Naive thymus-derived CD4-positive, alpha-beta T cell (primary cell): ENCODE measurements at regions of chr7 and their contacts with region 1.

Region 1: GRCh38 chr7:155763691-155764437 is 48.4 kb downstream of the SHH start:
- DNase-seq: peak in 8 of 9 donors; percentile 48 to 73 (median 60)
- ATAC-seq: peak; percentile 80
- H3K4me3 ChIP-seq: peak overlapping the region; percentile 12
- H3K4me3 Mint-ChIP-seq: peak overlapping the region; percentile 64 to 91 (median 80)
- H3K27ac ChIP-seq: peak overlapping the region; percentile 67
- H3K27ac Mint-ChIP-seq: peak overlapping the region; percentile 73 to 98 (median 91)
- H3K4me1 ChIP-seq: peaks cover 24 to 31% of the 10 kb centered on the region in 2 donors
- H3K4me1 Mint-ChIP-seq: peaks cover 39 to 67% (median 61%) of the 10 kb centered on the region in 7 donors
- H3K27me3 ChIP-seq: no peaks in the 10 kb centered on the region
- H3K27me3 Mint-ChIP-seq: no peaks in the 10 kb centered on the region

Region 2: DNA sequence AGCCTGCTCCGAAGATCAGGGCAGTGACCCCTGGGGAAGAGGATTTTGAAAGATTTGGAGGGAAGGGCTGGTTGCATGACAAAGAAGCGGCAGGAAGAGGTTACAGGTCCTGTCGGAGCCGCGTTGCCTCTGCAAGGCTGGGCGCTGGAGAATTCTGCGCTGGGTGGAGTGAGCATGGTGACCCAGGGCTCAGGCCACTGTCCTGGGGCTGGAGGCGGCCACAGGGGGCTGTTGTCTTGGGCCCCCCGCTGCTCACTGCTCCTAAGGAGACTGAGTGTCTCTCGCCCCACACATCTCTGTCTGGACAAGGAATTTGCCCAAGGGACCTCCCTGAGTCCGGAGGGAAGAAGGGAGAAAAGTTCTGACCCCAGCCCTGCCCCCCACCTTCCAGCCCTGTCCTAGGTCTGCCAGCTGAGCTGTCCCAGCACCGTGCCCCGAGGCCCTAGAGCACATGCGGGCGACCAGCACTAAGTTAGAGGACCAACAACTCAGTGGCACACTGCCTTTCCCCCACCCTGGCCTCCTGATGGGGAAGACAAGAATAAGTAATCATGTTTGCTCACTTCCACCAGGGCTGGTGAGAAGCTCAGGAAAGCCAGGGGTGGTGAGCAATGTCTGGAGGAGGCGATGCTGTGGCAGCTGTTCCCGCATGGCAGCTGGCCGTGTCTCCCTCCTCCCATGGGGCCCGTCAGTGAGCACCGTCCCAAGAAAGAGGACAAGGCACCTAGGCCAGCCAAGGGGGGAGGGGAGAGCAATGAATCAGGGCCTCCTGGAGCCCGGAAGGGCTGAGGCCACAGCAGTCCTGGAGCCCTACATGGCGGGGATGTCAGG is 535.7 kb before region 1 on chr7:
- CTCF ChIA-PET with region 1: no interaction called
- POLR2A ChIA-PET with region 1: no interaction called
- intact Hi-C with region 1: no loop called
- DNase-seq: no peak
- ATAC-seq: no peak
- H3K4me3 ChIP-seq: no peak overlapping the region
- H3K4me3 Mint-ChIP-seq: no peak overlapping the region
- H3K27ac ChIP-seq: no peak overlapping the region
- H3K27ac Mint-ChIP-seq: peak overlapping the region in 2 of 9 donors; percentile 33 to 36
- H3K4me1 ChIP-seq: no peaks in the 10 kb centered on the region
- H3K4me1 Mint-ChIP-seq: peaks cover 0 to 16% (median 0%) of the 10 kb centered on the region in 7 donors
- H3K27me3 ChIP-seq: no peaks in the 10 kb centered on the region
- H3K27me3 Mint-ChIP-seq: peaks cover 0 to 10% (median 0%) of the 10 kb centered on the region in 5 donors

Region 3: GRCh38 chr7:155676052-155676451 is 87.8 kb before region 1 on chr7:
- CTCF ChIA-PET with region 1: no interaction called
- POLR2A ChIA-PET with region 1: no interaction called
- intact Hi-C with region 1: no loop called
- DNase-seq: no peak
- ATAC-seq: no peak
- H3K4me3 ChIP-seq: no peak overlapping the region
- H3K4me3 Mint-ChIP-seq: no peak overlapping the region
- H3K27ac ChIP-seq: no peak overlapping the region
- H3K27ac Mint-ChIP-seq: peak overlapping the region in 1 of 9 donors; percentile 72
- H3K4me1 ChIP-seq: no peaks in the 10 kb centered on the region
- H3K4me1 Mint-ChIP-seq: peaks cover 10 to 53% (median 40%) of the 10 kb centered on the region in 7 donors
- H3K27me3 ChIP-seq: no peaks in the 10 kb centered on the region
- H3K27me3 Mint-ChIP-seq: no peaks in the 10 kb centered on the region

Region 4: DNA sequence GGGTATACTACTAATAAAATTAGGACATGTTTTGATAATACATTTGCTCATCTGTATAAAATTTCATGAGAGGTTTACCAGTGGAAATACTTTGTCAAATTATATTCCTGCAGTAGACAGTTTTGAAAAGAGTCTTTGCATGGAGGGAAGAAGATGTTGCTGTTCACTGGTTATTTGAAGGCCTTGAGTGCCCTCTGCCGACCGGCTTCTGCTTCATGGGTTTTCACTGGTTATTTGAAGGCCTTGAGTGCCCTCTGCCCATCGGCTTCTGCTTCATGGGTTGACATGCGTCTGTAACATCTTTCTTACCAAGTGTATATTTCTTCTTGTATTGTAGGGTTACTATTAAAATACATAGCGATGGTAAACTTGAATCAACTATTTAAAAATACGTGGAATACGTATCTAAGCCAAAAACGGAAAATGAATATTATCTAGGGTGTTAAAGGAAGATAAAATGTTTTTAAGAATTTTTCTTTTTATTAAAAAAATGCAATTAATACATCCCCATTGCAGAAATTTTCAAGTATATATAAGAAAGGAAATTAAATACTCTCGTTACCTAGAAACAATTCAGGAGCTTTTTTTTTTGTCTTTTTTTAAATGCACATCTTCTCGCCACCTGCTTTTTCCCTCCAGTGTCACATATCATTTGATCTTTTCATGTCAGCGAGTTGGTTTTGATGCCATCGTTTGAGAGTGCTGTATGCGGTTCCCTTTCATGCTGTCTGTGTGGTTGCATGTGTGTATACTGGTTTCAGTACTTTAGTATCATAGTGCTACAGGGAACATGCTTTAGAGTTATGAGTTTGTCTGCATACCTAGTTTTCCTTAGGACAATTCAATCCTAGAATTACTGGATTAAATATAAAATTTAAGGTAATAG is 25.0 kb before region 1 on chr7:
- CTCF ChIA-PET with region 1: interaction called, 3 read pairs
- POLR2A ChIA-PET with region 1: interaction called, 3 read pairs
- intact Hi-C with region 1: loop called (anchors 1 kb)
- DNase-seq: peak; percentile 27 to 85 (median 77)
- ATAC-seq: peak; percentile 93
- H3K4me3 ChIP-seq: no peak overlapping the region
- H3K4me3 Mint-ChIP-seq: peak overlapping the region in 9 of 10 donors; percentile 15 to 71 (median 62)
- H3K27ac ChIP-seq: peak overlapping the region; percentile 30
- H3K27ac Mint-ChIP-seq: peak overlapping the region; percentile 24 to 97 (median 87)
- H3K4me1 ChIP-seq: peaks cover 0 to 12% of the 10 kb centered on the region in 2 donors
- H3K4me1 Mint-ChIP-seq: peaks cover 17 to 71% (median 49%) of the 10 kb centered on the region in 7 donors
- H3K27me3 ChIP-seq: no peaks in the 10 kb centered on the region
- H3K27me3 Mint-ChIP-seq: no peaks in the 10 kb centered on the region

Region 5: GRCh38 chr7:155750726-155751125 is 13.1 kb before region 1 on chr7:
- CTCF ChIA-PET with region 1: interaction called, 3 read pairs
- POLR2A ChIA-PET with region 1: no interaction called
- intact Hi-C with region 1: loop called in 1 of 2 experiments (anchors 1 kb)
- DNase-seq: no peak
- ATAC-seq: no peak
- H3K4me3 ChIP-seq: no peak overlapping the region
- H3K4me3 Mint-ChIP-seq: no peak overlapping the region
- H3K27ac ChIP-seq: no peak overlapping the region
- H3K27ac Mint-ChIP-seq: no peak overlapping the region
- H3K4me1 ChIP-seq: peaks cover 14% of the 10 kb centered on the region in 2 donors
- H3K4me1 Mint-ChIP-seq: peaks cover 62 to 98% (median 85%) of the 10 kb centered on the region in 7 donors
- H3K27me3 ChIP-seq: no peaks in the 10 kb centered on the region
- H3K27me3 Mint-ChIP-seq: no peaks in the 10 kb centered on the region

Region 6: GRCh38 chr7:156055206-156055822 is 291.4 kb after region 1 on chr7:
- CTCF ChIA-PET with region 1: no interaction called
- POLR2A ChIA-PET with region 1: no interaction called
- intact Hi-C with region 1: no loop called
- DNase-seq: no peak
- ATAC-seq: no peak
- H3K4me3 ChIP-seq: no peak overlapping the region
- H3K4me3 Mint-ChIP-seq: no peak overlapping the region
- H3K27ac ChIP-seq: no peak overlapping the region
- H3K27ac Mint-ChIP-seq: no peak overlapping the region
- H3K4me1 ChIP-seq: no peaks in the 10 kb centered on the region
- H3K4me1 Mint-ChIP-seq: peaks cover 0 to 3% (median 0%) of the 10 kb centered on the region in 7 donors
- H3K27me3 ChIP-seq: no peaks in the 10 kb centered on the region
- H3K27me3 Mint-ChIP-seq: peaks cover 0 to 6% (median 0%) of the 10 kb centered on the region in 5 donors

Region 7: GRCh38 chr7:156402255-156402654 is 638.4 kb after region 1 on chr7:
- CTCF ChIA-PET with region 1: no interaction called
- POLR2A ChIA-PET with region 1: no interaction called
- intact Hi-C with region 1: no loop called
- DNase-seq: no peak
- ATAC-seq: no peak
- H3K4me3 ChIP-seq: no peak overlapping the region
- H3K4me3 Mint-ChIP-seq: no peak overlapping the region
- H3K27ac ChIP-seq: no peak overlapping the region
- H3K27ac Mint-ChIP-seq: no peak overlapping the region
- H3K4me1 ChIP-seq: no peaks in the 10 kb centered on the region
- H3K4me1 Mint-ChIP-seq: no peaks in the 10 kb centered on the region
- H3K27me3 ChIP-seq: no peaks in the 10 kb centered on the region
- H3K27me3 Mint-ChIP-seq: peaks cover 3 to 21% (median 4%) of the 10 kb centered on the region in 5 donors